ENCODE measurements at regions of chr13 and their contacts with region 1.

Region 1: DNA sequence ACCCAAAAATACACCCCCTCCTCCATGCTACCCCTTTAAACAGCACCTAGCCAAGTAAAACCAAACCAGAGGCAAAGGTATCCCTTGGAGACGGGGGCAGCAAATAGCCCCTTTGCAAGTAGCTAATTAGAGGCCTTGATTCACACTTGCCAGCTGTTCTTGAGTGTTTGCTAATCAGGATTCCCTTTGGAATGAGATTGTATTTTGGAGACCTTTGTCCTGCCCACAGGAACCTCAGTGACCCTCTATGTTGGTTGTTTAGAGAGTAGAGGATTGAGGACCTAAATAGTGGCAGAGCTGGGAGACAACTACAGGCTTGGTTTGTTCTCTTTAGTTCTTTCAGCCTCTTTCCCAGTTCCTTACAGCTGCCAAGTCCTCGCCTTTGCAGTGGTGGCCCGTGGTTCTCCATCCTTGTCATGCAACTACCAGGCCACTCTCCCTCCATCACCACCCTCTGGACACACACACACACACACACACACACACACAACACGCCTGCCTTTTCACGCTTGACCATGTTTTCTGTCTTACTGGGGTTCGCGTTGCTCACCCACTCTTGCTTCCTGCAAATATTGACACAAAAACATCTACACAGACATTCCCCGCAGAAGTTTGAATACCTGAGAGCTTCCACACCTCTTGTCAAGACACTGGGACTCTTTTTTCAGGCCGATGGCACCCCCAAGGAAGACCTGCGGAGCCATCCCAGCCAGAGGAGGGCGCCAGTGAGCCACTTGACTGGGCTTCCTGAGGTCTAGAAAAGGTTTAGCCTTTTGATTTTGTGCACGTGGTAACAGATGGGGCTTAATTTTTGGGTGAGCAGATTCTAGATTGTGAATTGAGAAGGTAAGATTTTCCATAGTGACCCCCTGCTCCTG is 80.0 kb upstream of the GPR183 start:
- DNase-seq: peak; percentile 66
- ATAC-seq: peak; percentile 93
- H3K4me3 ChIP-seq: no peak overlapping the region
- H3K27ac ChIP-seq: peak overlapping the region; percentile 41; the same call in 1 of the 2 replicates
- H3K4me1 ChIP-seq: peaks cover 26% of the 10 kb centered on the region
- H3K27me3 ChIP-seq: no peaks in the 10 kb centered on the region
- CTCF ChIP-seq: peak; percentile 95 to 99 (median 96)
- EP300 ChIP-seq: no peak
- POLR2A ChIP-seq: no peak
- RAD21 ChIP-seq: peak; percentile 99

Region 2: GRCh38 chr13:99296398-99296797 is 90.8 kb before region 1 on chr13:
- CTCF ChIA-PET with region 1: interaction called, 21 read pairs
- POLR2A ChIA-PET with region 1: interaction called, 5 read pairs
- RAD21 ChIA-PET with region 1: interaction called, 12 read pairs
- SMC1A ChIA-PET with region 1: interaction called, 17 read pairs
- in situ Hi-C with region 1: no loop called
- intact Hi-C with region 1: no loop called
- DNase-seq: no peak
- ATAC-seq: peak; percentile 15
- H3K4me3 ChIP-seq: peak overlapping the region; percentile 58; the same call in 1 of the 2 replicates
- H3K27ac ChIP-seq: peak overlapping the region; percentile 62
- H3K4me1 ChIP-seq: peaks cover 14% of the 10 kb centered on the region
- H3K27me3 ChIP-seq: no peaks in the 10 kb centered on the region
- CTCF ChIP-seq: no peak
- EP300 ChIP-seq: no peak
- POLR2A ChIP-seq: no peak
- RAD21 ChIP-seq: peak; percentile 2; the same call in 1 of the 2 replicates

Region 3: DNA sequence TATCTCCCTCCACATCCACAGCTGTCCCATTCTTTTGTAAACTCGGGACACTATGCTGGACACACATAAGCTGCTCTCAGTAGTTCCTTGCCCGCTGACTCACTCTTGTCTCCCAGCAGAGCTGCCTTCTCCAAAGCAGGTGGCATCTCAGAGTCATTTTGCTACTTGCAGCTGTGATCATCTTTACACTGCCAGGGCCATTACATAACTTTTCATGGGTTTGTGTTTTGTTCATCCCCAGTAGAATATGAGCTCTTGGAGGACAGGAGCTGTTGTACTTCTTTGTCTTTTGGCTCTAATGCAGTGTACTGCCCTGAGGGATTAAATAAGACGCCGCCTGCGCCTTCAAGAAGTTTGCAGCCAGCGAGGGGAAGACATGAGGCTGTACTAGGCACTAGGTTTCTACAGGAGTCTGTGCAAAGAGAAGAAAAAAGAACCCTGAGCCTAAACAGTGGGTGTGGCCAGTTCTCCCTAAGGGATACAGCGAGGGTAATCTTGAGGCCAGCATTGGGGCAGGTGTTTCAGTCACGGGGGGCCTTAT is 39.2 kb before region 1 on chr13:
- CTCF ChIA-PET with region 1: interaction called, 10 read pairs
- POLR2A ChIA-PET with region 1: no interaction called
- RAD21 ChIA-PET with region 1: interaction called, 5 read pairs
- SMC1A ChIA-PET with region 1: interaction called, 7 read pairs
- in situ Hi-C with region 1: no loop called
- intact Hi-C with region 1: no loop called
- DNase-seq: no peak
- ATAC-seq: peak; percentile 79
- H3K4me3 ChIP-seq: no peak overlapping the region
- H3K27ac ChIP-seq: peak overlapping the region; percentile 54
- H3K4me1 ChIP-seq: peaks cover 31% of the 10 kb centered on the region
- H3K27me3 ChIP-seq: no peaks in the 10 kb centered on the region
- CTCF ChIP-seq: no peak
- EP300 ChIP-seq: no peak
- POLR2A ChIP-seq: no peak
- RAD21 ChIP-seq: no peak

Region 4: DNA sequence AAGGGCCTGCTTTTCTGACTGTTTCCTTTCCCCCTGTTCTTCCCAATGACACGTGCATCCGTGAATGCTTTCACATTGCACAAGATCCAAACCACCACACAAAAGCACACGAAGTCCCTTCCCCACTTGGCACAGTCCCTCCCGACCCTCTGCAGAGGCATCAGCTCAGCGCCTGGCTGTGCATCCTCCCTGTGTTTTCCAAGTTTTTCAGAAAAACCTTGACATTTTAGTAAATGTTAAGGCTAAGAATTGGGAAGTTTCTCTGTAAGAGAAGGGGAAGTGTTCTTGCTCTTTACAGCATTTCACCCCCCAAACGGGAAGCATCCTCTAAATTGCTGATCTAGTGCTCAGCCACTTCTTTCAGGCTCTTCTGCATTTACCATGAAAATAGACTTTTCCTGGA is 19.6 kb after region 1 on chr13:
- CTCF ChIA-PET with region 1: interaction called, 17 read pairs
- POLR2A ChIA-PET with region 1: no interaction called
- RAD21 ChIA-PET with region 1: interaction called, 6 read pairs
- SMC1A ChIA-PET with region 1: interaction called, 15 read pairs
- in situ Hi-C with region 1: no loop called
- intact Hi-C with region 1: no loop called
- DNase-seq: no peak
- ATAC-seq: no peak
- H3K4me3 ChIP-seq: no peak overlapping the region
- H3K27ac ChIP-seq: no peak overlapping the region
- H3K4me1 ChIP-seq: peaks cover 21% of the 10 kb centered on the region
- H3K27me3 ChIP-seq: no peaks in the 10 kb centered on the region
- CTCF ChIP-seq: no peak
- EP300 ChIP-seq: no peak
- POLR2A ChIP-seq: no peak
- RAD21 ChIP-seq: no peak

Region 5: DNA sequence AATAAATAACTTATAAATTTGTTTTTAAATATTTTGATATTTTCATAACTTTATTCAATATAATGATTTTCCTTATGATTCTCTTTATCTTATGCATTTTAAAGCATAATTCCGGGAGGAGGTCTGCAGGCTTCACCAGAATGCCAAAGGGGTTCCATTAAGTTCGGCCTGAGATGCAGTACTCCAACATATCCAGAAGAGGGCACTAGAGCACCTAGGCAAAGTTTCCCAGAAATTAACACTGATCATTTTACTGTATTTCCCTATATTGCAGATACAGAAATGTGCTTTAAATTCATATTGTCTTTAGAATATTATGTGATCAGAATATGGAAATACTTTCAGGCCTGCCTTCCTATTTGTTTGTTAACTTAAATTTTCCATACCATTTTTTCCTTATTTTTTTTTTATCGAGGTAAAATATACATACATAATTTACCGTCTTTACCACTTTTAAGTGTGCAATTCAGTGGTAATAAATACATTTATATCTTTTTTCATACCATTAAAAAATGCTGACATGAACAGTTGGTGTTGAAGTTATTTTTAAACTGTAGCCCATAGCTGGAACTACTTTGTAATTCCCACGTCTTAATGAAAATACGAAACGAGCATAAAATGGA is 55.2 kb after region 1 on chr13:
- CTCF ChIA-PET with region 1: interaction called, 577 read pairs
- POLR2A ChIA-PET with region 1: interaction called, 26 read pairs
- RAD21 ChIA-PET with region 1: interaction called, 168 read pairs
- SMC1A ChIA-PET with region 1: interaction called, 265 read pairs
- in situ Hi-C with region 1: loop called (anchors 5 kb)
- intact Hi-C with region 1: loop called (anchors 1 kb)
- DNase-seq: no peak
- ATAC-seq: peak; percentile 77
- H3K4me3 ChIP-seq: no peak overlapping the region
- H3K27ac ChIP-seq: no peak overlapping the region
- H3K4me1 ChIP-seq: 0 out of 2 replicates have a peak, but pooled peaks cover 2% of the 10 kb centered on the region
- H3K27me3 ChIP-seq: peaks cover 2 to 4% of the 10 kb centered on the region in 2 experiments; a peak in 2 of 4 replicates
- CTCF ChIP-seq: peak; percentile 81 to 93 (median 88)
- EP300 ChIP-seq: no peak
- POLR2A ChIP-seq: no peak
- RAD21 ChIP-seq: peak; percentile 96